ENCODE measurements at regions of chr12 and their contacts with region 1.

Region 1: DNA sequence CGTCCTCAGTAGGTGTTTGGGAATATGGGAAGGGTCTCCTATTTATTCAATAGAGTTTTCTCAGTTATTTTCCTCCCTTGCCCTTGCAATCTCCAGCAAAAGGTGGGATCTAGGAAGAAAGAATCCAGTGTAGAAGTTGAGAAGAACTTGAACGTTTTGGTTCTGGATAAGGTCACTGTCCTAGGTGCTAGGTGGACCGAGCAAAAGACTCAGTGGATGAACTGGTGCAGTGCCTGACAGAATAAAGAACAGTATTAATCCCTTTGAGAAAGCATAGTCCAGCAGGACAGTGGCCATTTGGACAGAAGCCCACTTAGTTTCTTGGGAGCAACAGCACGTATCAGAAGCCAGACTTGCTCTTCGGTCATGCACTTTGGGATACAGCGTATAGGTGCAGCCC is 32.7 kb upstream of the LRTM2 start:
- DNase-seq: no peak
- H3K4me3 ChIP-seq: no peak overlapping the region
- H3K27ac ChIP-seq: no peak overlapping the region
- H3K4me1 ChIP-seq: no peaks in the 10 kb centered on the region
- H3K27me3 ChIP-seq: no peaks in the 10 kb centered on the region
- CTCF ChIP-seq: no peak
- EP300 ChIP-seq: no peak
- POLR2A ChIP-seq: no peak

Region 2: GRCh38 chr12:1644534-1645438 is 142.9 kb before region 1 on chr12:
- in situ Hi-C with region 1: loop called in 2 of 4 experiments (anchors 5 kb)
- intact Hi-C with region 1: no loop called
- DNase-seq: peak; percentile 68
- H3K4me3 ChIP-seq: no peak overlapping the region
- H3K27ac ChIP-seq: peak overlapping the region in 2 of 4 donors; percentile 61 to 62
- H3K4me1 ChIP-seq: peaks cover 9 to 25% (median 11%) of the 10 kb centered on the region in 4 donors
- H3K27me3 ChIP-seq: no peaks in the 10 kb centered on the region
- CTCF ChIP-seq: no peak
- EP300 ChIP-seq: no peak
- POLR2A ChIP-seq: no peak

Region 3: GRCh38 chr12:2004113-2004929 is 216.6 kb after region 1 on chr12 and contains the start of gene DCP1B:
- in situ Hi-C with region 1: no loop called
- intact Hi-C with region 1: no loop called
- DNase-seq: peak; percentile 98
- H3K4me3 ChIP-seq: peak within 1 kb of the TSS; percentile 69 to 94 (median 89)
- H3K27ac ChIP-seq: peak within 1 kb of the TSS; percentile 90 to 97 (median 94)
- H3K4me1 ChIP-seq: peaks cover 0 to 27% (median 13%) of the 10 kb centered on the region in 4 donors
- H3K27me3 ChIP-seq: no peaks in the 10 kb centered on the region
- CTCF ChIP-seq: peak in 1 of 5 experiments; percentile 2
- EP300 ChIP-seq: no peak
- POLR2A ChIP-seq: peak; percentile 73
- total RNA-seq, gene DCP1B: 17.3 to 26.2 (median 20.6) TPM